ENCODE measurements at regions of chr1 and their contacts with region 1.

Region 1: DNA sequence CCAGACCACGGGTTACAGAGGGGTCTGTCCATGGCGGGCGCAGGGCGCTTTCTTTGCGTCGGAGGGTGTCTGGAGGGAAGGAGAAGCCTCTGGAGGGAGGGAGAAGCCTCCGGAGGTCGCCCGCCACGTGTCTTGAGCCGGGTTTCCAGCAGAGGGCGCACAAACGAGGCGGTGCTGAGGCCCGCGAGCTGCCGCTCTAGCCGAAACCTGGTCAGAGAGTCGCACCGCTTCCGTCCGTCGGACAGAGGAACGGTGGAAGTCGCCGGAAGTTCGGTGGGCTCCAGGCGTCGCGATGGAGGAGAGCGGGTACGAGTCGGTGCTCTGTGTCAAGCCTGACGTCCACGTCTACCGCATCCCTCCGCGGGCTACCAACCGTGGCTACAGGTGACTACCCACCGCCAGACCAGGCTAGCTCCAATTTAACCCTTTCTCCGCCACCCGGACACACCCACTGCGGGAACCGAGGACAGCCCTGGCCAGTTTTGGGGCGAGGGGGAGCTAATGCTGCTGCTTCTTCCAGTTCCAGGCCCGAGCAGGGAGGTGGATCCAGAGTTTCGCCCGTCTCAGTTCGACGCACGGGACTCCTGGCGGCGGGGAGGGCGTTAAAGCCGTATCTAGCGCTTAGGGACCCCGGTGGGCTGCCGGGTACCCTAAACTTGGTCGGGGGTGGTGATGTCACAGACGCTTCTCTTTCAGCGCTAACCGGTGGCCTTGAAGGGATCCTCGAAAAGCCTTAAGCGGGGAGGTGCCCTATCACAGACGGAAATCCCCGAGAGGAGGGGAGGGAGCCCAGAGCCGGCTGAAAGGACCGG is at the start of gene NECAP2:
- DNase-seq: peak; percentile 92
- H3K4me3 ChIP-seq: peak within 1 kb of the TSS; percentile 90 to 100
- H3K27ac ChIP-seq: peak within 1 kb of the TSS; percentile 63 to 80
- H3K4me1 ChIP-seq: peaks cover 3 to 6% of the 10 kb centered on the region in 2 experiments; a peak in 1 of 4 replicates
- H3K27me3 ChIP-seq: no peaks in the 10 kb centered on the region
- CTCF ChIP-seq: peak; percentile 77
- EP300 ChIP-seq: peak; percentile 19 to 82; a peak in 2 of 4 replicates
- RAD21 ChIP-seq: peak; percentile 30
- polyA plus RNA-seq, gene NECAP2: 100.0 and 116 TPM in 2 replicates

Region 2: GRCh38 chr1:16425125-16426025 is 15.3 kb before region 1 on chr1:
- CTCF ChIA-PET with region 1: interaction called, 15 read pairs
- POLR2A ChIA-PET with region 1: no interaction called
- DNase-seq: no peak
- H3K4me3 ChIP-seq: no peak overlapping the region
- H3K27ac ChIP-seq: no peak overlapping the region
- H3K4me1 ChIP-seq: no peaks in the 10 kb centered on the region
- H3K27me3 ChIP-seq: no peaks in the 10 kb centered on the region
- CTCF ChIP-seq: no peak
- EP300 ChIP-seq: no peak
- RAD21 ChIP-seq: no peak

Region 3: GRCh38 chr1:16430606-16431005 is 10.1 kb before region 1 on chr1:
- CTCF ChIA-PET with region 1: interaction called, 15 read pairs
- POLR2A ChIA-PET with region 1: no interaction called
- DNase-seq: no peak
- H3K4me3 ChIP-seq: no peak overlapping the region
- H3K27ac ChIP-seq: no peak overlapping the region
- H3K4me1 ChIP-seq: no peaks in the 10 kb centered on the region
- H3K27me3 ChIP-seq: no peaks in the 10 kb centered on the region
- CTCF ChIP-seq: no peak
- EP300 ChIP-seq: no peak
- RAD21 ChIP-seq: no peak

Region 4: GRCh38 chr1:16459352-16459925 is 18.8 kb after region 1 on chr1:
- CTCF ChIA-PET with region 1: interaction called, 10 read pairs
- POLR2A ChIA-PET with region 1: interaction called, 3 read pairs
- DNase-seq: no peak
- H3K4me3 ChIP-seq: no peak overlapping the region
- H3K27ac ChIP-seq: no peak overlapping the region
- H3K4me1 ChIP-seq: no peaks in the 10 kb centered on the region
- H3K27me3 ChIP-seq: no peaks in the 10 kb centered on the region
- CTCF ChIP-seq: no peak
- EP300 ChIP-seq: no peak
- RAD21 ChIP-seq: no peak